ENCODE measurements at regions of chr3 and their contacts with region 1.

Region 1: DNA sequence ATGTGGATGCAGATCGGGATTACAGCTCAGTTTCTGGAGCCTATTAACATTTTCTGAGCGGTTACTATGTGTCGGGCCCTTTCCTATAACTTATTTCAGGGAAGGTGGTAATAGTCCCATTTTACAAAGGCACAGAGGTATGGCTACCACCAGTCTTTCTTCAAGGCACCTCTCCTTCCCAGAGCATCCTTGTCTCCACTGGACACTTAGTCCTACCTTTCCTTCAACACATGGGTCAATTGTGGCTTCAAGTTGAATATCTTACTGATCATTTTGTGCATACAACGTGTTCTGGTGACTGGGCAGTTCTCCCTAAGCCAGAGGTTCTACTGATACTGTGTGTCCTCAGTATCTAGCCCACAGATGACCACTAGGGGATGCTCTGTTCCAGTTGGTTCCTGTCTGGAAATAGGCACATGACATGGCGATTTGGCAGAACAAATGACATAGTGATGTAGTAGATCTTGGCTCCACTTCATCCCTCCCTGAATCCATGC is 60.7 kb upstream of the CMTM8 start:
- DNase-seq: peak; percentile 73
- H3K4me3 Mint-ChIP-seq: peak overlapping the region; percentile 25
- H3K27ac Mint-ChIP-seq: no peak overlapping the region
- H3K4me1 Mint-ChIP-seq: peaks cover 12% of the 10 kb centered on the region
- H3K27me3 Mint-ChIP-seq: no peaks in the 10 kb centered on the region

Region 2: GRCh38 chr3:31456373-31456772 is 721.4 kb before region 1 on chr3:
- CTCF ChIA-PET with region 1: no interaction called
- POLR2A ChIA-PET with region 1: no interaction called
- intact Hi-C with region 1: no loop called
- DNase-seq: no peak
- H3K4me3 Mint-ChIP-seq: no peak overlapping the region
- H3K27ac Mint-ChIP-seq: no peak overlapping the region
- H3K4me1 Mint-ChIP-seq: peaks cover 10% of the 10 kb centered on the region
- H3K27me3 Mint-ChIP-seq: no peaks in the 10 kb centered on the region

Region 3: DNA sequence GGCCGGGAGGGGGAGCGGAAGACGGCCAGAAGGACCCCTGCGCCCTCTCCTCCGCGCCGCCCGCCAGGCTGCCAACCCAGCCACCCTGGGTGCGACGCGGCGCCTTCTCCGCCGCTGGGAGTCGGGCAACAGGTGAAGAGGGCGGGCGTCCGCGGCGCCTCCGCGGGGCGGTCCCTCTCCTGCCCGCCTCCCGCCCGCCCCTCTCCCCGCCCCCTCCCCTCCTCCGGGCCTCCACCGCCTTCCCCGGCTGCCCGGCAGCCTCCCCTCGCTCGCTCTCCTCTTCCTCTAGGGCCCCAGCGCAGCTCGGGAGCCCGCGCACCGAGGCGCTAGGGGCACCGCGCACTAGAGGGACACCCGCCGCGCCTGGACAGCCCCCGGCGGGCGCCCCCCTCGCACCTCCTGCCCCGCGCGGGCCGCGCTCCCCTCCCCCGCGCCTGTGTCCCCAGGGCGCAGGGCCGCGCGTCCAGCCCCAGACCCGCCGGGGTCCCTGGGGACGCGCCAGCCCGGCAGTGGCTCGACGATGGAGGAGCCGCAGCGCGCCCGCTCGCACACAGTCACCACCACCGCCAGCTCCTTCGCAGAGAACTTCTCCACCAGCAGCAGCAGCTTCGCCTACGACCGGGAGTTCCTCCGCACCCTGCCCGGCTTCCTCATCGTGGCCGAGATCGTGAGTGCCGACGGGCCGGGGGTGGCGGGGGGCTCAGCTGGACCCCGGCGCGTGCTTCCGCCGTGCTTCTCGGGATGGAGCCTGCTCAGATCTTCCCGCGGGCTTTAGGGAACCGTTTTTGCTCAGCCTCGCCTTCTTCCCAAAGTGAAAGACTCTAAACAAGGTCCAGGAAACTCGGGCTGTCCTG is 60.9 kb after region 1 on chr3 and contains the start of gene CMTM8:
- CTCF ChIA-PET with region 1: interaction called, 39 read pairs
- POLR2A ChIA-PET with region 1: no interaction called
- intact Hi-C with region 1: loop called (anchors 2 kb)
- DNase-seq: peak; percentile 75
- H3K4me3 Mint-ChIP-seq: peak within 1 kb of the TSS; percentile 81
- H3K27ac Mint-ChIP-seq: peak within 1 kb of the TSS; percentile 34
- H3K4me1 Mint-ChIP-seq: peaks cover 31% of the 10 kb centered on the region
- H3K27me3 Mint-ChIP-seq: peaks cover 4% of the 10 kb centered on the region
- total RNA-seq, gene CMTM8: 11.6 to 13.0 TPM

Region 4: GRCh38 chr3:32296256-32297204 is 118.8 kb after region 1 on chr3:
- CTCF ChIA-PET with region 1: interaction called, 32 read pairs
- POLR2A ChIA-PET with region 1: interaction called, 3 read pairs
- intact Hi-C with region 1: loop called (anchors 2 kb)
- DNase-seq: peak; percentile 76
- H3K4me3 Mint-ChIP-seq: peak overlapping the region; percentile 44
- H3K27ac Mint-ChIP-seq: peak overlapping the region; percentile 63
- H3K4me1 Mint-ChIP-seq: peaks cover 39% of the 10 kb centered on the region
- H3K27me3 Mint-ChIP-seq: no peaks in the 10 kb centered on the region

Region 5: DNA sequence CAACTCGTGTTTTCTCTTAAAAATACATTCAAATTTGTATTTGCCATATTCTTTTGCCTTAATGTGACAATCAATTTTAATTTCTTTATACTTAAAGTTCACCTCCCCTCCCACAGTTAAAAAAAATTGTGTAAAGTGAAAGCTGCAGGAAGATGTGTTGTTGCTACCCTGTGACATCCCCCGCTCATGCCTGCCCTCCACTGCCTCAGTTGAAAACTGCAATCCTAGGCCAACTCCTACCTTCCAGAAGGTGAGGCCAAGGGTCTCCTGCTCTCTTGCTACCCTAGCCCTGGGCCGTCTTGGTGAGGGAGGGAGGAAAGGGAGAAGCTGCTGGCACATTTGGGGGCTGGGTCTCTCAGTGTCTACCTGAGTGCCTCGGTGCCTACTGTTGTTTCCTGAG is 156.9 kb after region 1 on chr3:
- CTCF ChIA-PET with region 1: interaction called, 56 read pairs
- POLR2A ChIA-PET with region 1: interaction called, 3 read pairs
- intact Hi-C with region 1: loop called (anchors 1 kb)
- DNase-seq: peak; percentile 80
- H3K4me3 Mint-ChIP-seq: no peak overlapping the region
- H3K27ac Mint-ChIP-seq: no peak overlapping the region
- H3K4me1 Mint-ChIP-seq: peaks cover 48% of the 10 kb centered on the region
- H3K27me3 Mint-ChIP-seq: no peaks in the 10 kb centered on the region

Region 6: GRCh38 chr3:32401556-32402081 is 223.9 kb after region 1 on chr3:
- CTCF ChIA-PET with region 1: interaction called, 5 read pairs
- POLR2A ChIA-PET with region 1: no interaction called
- intact Hi-C with region 1: loop called (anchors 1 kb)
- DNase-seq: peak; percentile 74
- H3K4me3 Mint-ChIP-seq: peak overlapping the region; percentile 85
- H3K27ac Mint-ChIP-seq: peak overlapping the region; percentile 99
- H3K4me1 Mint-ChIP-seq: peaks cover 58% of the 10 kb centered on the region
- H3K27me3 Mint-ChIP-seq: no peaks in the 10 kb centered on the region

Region 7: DNA sequence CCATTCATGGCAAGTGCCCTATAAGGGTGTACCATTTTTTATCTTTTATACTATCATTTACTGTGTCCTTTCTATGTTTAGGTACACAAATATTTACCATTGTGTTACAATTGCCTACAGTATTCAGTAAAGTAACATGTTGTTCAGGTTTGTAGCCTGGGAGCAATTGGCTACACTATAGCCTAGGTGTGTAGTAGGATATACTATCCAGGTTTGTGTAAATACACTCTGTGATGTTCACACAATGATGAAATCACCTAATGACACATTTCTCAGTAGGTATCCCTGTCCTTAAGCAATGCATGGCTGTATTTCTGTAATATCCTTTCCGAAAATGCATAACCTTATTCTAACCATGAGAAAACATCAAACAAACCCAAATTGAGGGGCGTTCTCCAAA is 489.4 kb after region 1 on chr3:
- CTCF ChIA-PET with region 1: interaction called, 5 read pairs
- POLR2A ChIA-PET with region 1: no interaction called
- intact Hi-C with region 1: loop called (anchors 2 kb)
- DNase-seq: no peak
- H3K4me3 Mint-ChIP-seq: no peak overlapping the region
- H3K27ac Mint-ChIP-seq: no peak overlapping the region
- H3K4me1 Mint-ChIP-seq: no peaks in the 10 kb centered on the region
- H3K27me3 Mint-ChIP-seq: no peaks in the 10 kb centered on the region

Region 8: GRCh38 chr3:32934150-32934742 is 756.5 kb after region 1 on chr3:
- CTCF ChIA-PET with region 1: no interaction called
- POLR2A ChIA-PET with region 1: no interaction called
- intact Hi-C with region 1: no loop called
- DNase-seq: peak; percentile 39
- H3K4me3 Mint-ChIP-seq: no peak overlapping the region
- H3K27ac Mint-ChIP-seq: no peak overlapping the region
- H3K4me1 Mint-ChIP-seq: no peaks in the 10 kb centered on the region
- H3K27me3 Mint-ChIP-seq: peaks cover 2% of the 10 kb centered on the region

Measured in activated CD4-positive, alpha-beta memory T cell treated with anti-CD3 and anti-CD28 coated beads for 36 hours (primary cell).